HepG2 (cell line): ENCODE measurements at regions of chr17 and their contacts with region 1.

Region 1: DNA sequence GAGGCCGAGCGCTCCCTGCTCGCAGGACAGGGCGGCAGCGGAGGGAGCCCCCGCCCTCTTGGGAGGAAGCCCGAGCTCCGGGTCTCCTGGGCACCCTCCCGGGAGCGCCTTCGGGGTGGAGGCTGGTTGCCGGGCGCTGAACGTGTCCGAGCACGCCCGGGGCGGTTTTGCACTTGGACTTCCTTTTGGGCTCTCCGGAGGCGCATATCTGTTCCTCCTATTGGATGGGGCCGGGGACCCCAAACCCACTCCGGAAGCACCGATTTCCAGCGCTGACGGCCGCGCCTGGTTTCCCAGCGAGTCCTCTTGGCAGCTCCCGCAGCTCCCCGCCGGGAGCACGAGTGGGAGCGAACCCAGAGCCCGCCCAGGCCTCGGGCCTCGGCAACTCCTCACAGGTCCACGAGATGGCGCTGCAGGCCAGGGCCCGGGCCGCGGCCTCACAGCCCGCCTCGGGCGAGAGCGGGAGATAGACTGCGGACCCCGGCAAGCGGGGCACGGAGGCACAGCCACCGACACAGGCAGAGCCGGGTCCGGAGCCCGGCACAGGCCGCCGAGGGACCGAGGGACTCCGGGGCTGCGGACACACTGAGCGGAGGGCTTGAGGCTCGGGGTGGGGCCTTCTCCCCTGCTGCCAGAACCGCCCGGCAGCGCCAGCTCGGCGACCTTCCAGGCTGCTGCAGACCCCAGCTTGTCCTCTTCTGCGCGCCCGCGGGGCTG is 12.7 kb downstream of the TBX2 start:
- DNase-seq: peak; percentile 64
- ATAC-seq: peak; percentile 73
- H3K4me3 ChIP-seq: peak overlapping the region; percentile 69 to 86 (median 77)
- H3K27ac ChIP-seq: peak overlapping the region; percentile 68
- H3K4me1 ChIP-seq: peaks cover 69% of the 10 kb centered on the region
- H3K27me3 ChIP-seq: no peaks in the 10 kb centered on the region
- CTCF ChIP-seq: peak; percentile 99
- EP300 ChIP-seq: peak in 1 of 2 experiments; percentile 40; a peak in 1 of 4 replicates
- POLR2A ChIP-seq: peak in 1 of 2 experiments; percentile 53; a peak in 3 of 4 replicates
- RAD21 ChIP-seq: peak; percentile 100

Region 2: DNA sequence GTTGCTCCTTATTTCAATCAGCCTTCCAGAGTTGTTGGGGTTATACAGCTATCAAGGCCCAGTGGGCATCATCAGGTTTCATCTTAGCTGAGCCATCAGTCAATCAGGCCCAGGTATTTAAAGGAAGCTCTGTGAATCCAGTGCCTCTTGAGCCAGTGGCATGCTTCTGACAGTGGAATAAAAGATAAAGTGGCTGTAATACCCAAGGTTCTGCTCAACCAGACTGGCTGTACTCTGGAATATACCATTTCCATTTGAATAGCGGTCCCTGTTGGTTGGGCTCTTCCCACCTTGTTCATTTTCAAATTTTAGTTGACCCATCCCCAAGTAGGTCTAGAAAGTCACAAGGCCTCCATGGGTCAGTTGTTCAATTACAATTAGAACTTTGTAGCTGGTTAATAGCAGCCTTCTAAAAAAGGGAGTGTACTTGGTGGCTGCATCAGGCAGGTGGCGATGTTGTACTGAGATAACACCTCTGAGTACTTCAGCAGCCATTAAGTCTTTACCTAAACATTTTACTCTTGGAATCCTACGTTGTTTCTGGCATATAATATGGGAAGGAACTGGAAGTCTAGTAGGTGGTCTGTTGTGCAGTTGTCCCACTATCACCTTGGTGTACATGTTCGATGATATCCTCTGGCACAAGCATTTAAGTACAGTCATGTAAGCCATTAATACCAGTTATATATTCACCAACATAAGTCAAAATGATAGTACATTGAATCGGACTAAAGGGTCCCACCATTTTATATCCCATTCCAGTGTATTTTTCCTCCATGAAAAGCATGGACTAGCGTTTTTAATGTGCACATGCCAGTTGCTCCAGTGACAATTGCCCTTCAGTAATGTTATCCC is 440.6 kb before region 1 on chr17:
- CTCF ChIA-PET with region 1: interaction called, 13 read pairs
- POLR2A ChIA-PET with region 1: no interaction called
- in situ Hi-C with region 1: no loop called
- intact Hi-C with region 1: loop called (anchors 2 kb)
- DNase-seq: peak; percentile 56
- ATAC-seq: peak; percentile 94
- H3K4me3 ChIP-seq: no peak overlapping the region
- H3K27ac ChIP-seq: no peak overlapping the region
- H3K4me1 ChIP-seq: no peaks in the 10 kb centered on the region
- H3K27me3 ChIP-seq: no peaks in the 10 kb centered on the region
- CTCF ChIP-seq: peak; percentile 89
- EP300 ChIP-seq: no peak
- POLR2A ChIP-seq: no peak
- RAD21 ChIP-seq: peak; percentile 73

Region 3: GRCh38 chr17:61389670-61390478 is 22.4 kb before region 1 on chr17:
- CTCF ChIA-PET with region 1: no interaction called
- POLR2A ChIA-PET with region 1: interaction called, 11 read pairs
- in situ Hi-C with region 1: no loop called
- intact Hi-C with region 1: no loop called
- DNase-seq: no peak
- ATAC-seq: peak; percentile 52
- H3K4me3 ChIP-seq: peak overlapping the region in 1 of 3 experiments; percentile 21; a peak in 1 of 6 replicates
- H3K27ac ChIP-seq: no peak overlapping the region
- H3K4me1 ChIP-seq: peaks cover 66% of the 10 kb centered on the region
- H3K27me3 ChIP-seq: no peaks in the 10 kb centered on the region
- CTCF ChIP-seq: peak; percentile 99
- EP300 ChIP-seq: 0 out of 4 replicates have a peak, but pooled peaks of 1 of the 2 experiments have one; percentile 13
- POLR2A ChIP-seq: no peak
- RAD21 ChIP-seq: peak; percentile 95

Region 4: GRCh38 chr17:61495145-61495857 is 83.0 kb after region 1 on chr17:
- CTCF ChIA-PET with region 1: interaction called, 10 read pairs
- POLR2A ChIA-PET with region 1: no interaction called
- in situ Hi-C with region 1: loop called (anchors 5 kb)
- intact Hi-C with region 1: no loop called
- DNase-seq: no peak
- ATAC-seq: no peak
- H3K4me3 ChIP-seq: no peak overlapping the region
- H3K27ac ChIP-seq: no peak overlapping the region
- H3K4me1 ChIP-seq: peaks cover 76% of the 10 kb centered on the region
- H3K27me3 ChIP-seq: no peaks in the 10 kb centered on the region
- CTCF ChIP-seq: no peak
- EP300 ChIP-seq: no peak
- POLR2A ChIP-seq: no peak
- RAD21 ChIP-seq: no peak

Region 5: DNA sequence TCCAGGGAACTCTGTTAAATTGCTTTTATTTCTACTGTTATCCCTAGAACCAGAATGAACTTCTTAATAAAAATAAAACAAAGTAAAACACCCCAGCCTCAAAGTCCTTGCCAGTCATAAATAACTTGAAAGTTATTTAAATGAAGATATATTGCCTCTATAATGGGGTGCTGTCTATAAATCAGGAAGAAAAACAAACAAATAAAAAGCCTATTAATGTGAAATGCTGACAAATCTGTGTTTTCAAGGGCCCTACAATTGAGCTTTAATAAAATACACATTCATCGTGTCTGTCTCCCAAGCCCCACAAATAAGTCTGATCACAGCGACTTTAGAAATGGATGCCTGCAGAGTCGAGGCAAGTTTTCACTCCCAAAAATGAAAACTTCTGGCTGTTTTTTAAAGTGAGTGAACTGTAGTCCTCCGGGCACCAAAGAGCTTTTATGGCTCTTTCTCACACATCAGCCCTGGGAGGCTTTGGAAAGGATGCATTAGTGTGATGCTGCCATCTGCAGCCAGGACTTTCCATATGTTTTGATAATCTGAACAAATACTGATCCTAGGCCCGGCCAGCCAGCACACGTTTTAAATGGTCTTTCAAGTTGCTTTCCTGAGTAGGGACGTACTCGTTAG is 162.4 kb after region 1 on chr17:
- CTCF ChIA-PET with region 1: interaction called, 18 read pairs
- POLR2A ChIA-PET with region 1: interaction called, 5 read pairs
- in situ Hi-C with region 1: no loop called
- intact Hi-C with region 1: loop called (anchors 1 kb)
- DNase-seq: peak; percentile 80
- ATAC-seq: peak; percentile 99
- H3K4me3 ChIP-seq: no peak overlapping the region
- H3K27ac ChIP-seq: no peak overlapping the region
- H3K4me1 ChIP-seq: peaks cover 18% of the 10 kb centered on the region
- H3K27me3 ChIP-seq: no peaks in the 10 kb centered on the region
- CTCF ChIP-seq: peak; percentile 88
- EP300 ChIP-seq: no peak
- POLR2A ChIP-seq: no peak
- RAD21 ChIP-seq: peak; percentile 71; the same call in 1 of the 2 replicates

Region 6: GRCh38 chr17:61837175-61838051 is 425.1 kb after region 1 on chr17:
- CTCF ChIA-PET with region 1: interaction called, 3 read pairs
- POLR2A ChIA-PET with region 1: no interaction called
- in situ Hi-C with region 1: loop called (anchors 10 kb)
- intact Hi-C with region 1: loop called (anchors 5 kb)
- DNase-seq: peak; percentile 54
- ATAC-seq: peak; percentile 71
- H3K4me3 ChIP-seq: no peak overlapping the region
- H3K27ac ChIP-seq: no peak overlapping the region
- H3K4me1 ChIP-seq: no peaks in the 10 kb centered on the region
- H3K27me3 ChIP-seq: no peaks in the 10 kb centered on the region
- CTCF ChIP-seq: peak; percentile 73
- EP300 ChIP-seq: no peak
- POLR2A ChIP-seq: no peak
- RAD21 ChIP-seq: peak; percentile 66; the same call in 1 of the 2 replicates